SK-N-SH (cell line): ENCODE measurements at regions of chr1 and their contacts with region 1.

Region 1: GRCh38 chr1:216742625-216743024 is 19.4 kb upstream of the ESRRG start:
- DNase-seq: no peak
- H3K4me3 ChIP-seq: no peak overlapping the region
- H3K27ac ChIP-seq: no peak overlapping the region
- H3K4me1 ChIP-seq: peaks cover 0 to 2% of the 10 kb centered on the region in 2 experiments; a peak in 1 of 4 replicates
- H3K27me3 ChIP-seq: no peaks in the 10 kb centered on the region
- CTCF ChIP-seq: peak; percentile 67
- EP300 ChIP-seq: no peak
- RAD21 ChIP-seq: peak; percentile 68

Region 2: GRCh38 chr1:215992620-215993019 is 750.0 kb before region 1 on chr1:
- CTCF ChIA-PET with region 1: interaction called, 11 read pairs
- POLR2A ChIA-PET with region 1: no interaction called
- DNase-seq: peak; percentile 32
- H3K4me3 ChIP-seq: no peak overlapping the region
- H3K27ac ChIP-seq: no peak overlapping the region
- H3K4me1 ChIP-seq: peaks cover 0 to 3% of the 10 kb centered on the region in 2 experiments; a peak in 2 of 4 replicates
- H3K27me3 ChIP-seq: no peaks in the 10 kb centered on the region
- CTCF ChIP-seq: peak; percentile 64
- EP300 ChIP-seq: no peak
- RAD21 ChIP-seq: peak; percentile 87

Region 3: GRCh38 chr1:216710055-216710454 is 32.6 kb before region 1 on chr1:
- CTCF ChIA-PET with region 1: no interaction called
- POLR2A ChIA-PET with region 1: no interaction called
- DNase-seq: no peak
- H3K4me3 ChIP-seq: no peak overlapping the region
- H3K27ac ChIP-seq: peak overlapping the region in 1 of 2 experiments; percentile 40; a peak in 1 of 4 replicates
- H3K4me1 ChIP-seq: peaks cover 0 to 20% of the 10 kb centered on the region in 2 experiments; a peak in 2 of 4 replicates
- H3K27me3 ChIP-seq: no peaks in the 10 kb centered on the region
- CTCF ChIP-seq: no peak
- EP300 ChIP-seq: no peak
- RAD21 ChIP-seq: no peak

Region 4: GRCh38 chr1:216723274-216723780 is 19.3 kb before region 1 on chr1 and contains the start of gene ESRRG:
- CTCF ChIA-PET with region 1: interaction called, 27 read pairs
- POLR2A ChIA-PET with region 1: no interaction called
- DNase-seq: peak; percentile 75
- H3K4me3 ChIP-seq: peak within 1 kb of the TSS; percentile 61 to 71
- H3K27ac ChIP-seq: peak within 1 kb of the TSS in 1 of 2 experiments; percentile 76; a peak in 2 of 4 replicates
- H3K4me1 ChIP-seq: peaks cover 0 to 4% of the 10 kb centered on the region in 2 experiments; a peak in 2 of 4 replicates
- H3K27me3 ChIP-seq: no peaks in the 10 kb centered on the region
- CTCF ChIP-seq: no peak
- EP300 ChIP-seq: peak in 1 of 2 experiments; percentile 27; a peak in 1 of 4 replicates
- RAD21 ChIP-seq: no peak
- polyA plus RNA-seq, gene ESRRG: 0.26 and 0.57 TPM in 2 replicates

Region 5: DNA sequence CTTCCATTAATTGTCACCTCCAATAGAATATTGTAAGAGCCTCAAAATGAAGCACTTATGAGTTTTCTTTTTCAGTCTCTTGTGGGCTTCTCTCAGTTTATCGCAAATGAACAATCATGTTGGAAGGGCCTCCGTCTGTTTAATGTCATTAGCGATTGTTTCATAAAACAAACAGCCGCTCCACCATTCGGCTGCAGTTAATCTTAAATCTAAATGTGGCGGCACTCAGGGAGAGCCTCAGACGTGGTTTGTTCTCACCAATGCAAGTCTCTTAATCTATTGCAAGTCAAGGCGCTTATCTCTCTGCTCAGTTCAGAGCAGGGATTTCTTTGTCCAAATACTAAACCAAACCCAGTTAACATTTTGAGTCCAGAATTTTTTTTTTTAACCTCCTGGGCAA is 15.5 kb after region 1 on chr1:
- CTCF ChIA-PET with region 1: no interaction called
- POLR2A ChIA-PET with region 1: no interaction called
- DNase-seq: peak; percentile 6
- H3K4me3 ChIP-seq: no peak overlapping the region
- H3K27ac ChIP-seq: no peak overlapping the region
- H3K4me1 ChIP-seq: peaks cover 0 to 3% of the 10 kb centered on the region in 2 experiments; a peak in 1 of 4 replicates
- H3K27me3 ChIP-seq: no peaks in the 10 kb centered on the region
- CTCF ChIP-seq: no peak
- EP300 ChIP-seq: peak in 1 of 2 experiments; percentile 37; a peak in 1 of 4 replicates
- RAD21 ChIP-seq: no peak

Region 6: GRCh38 chr1:216832197-216832596 is 89.6 kb after region 1 on chr1:
- CTCF ChIA-PET with region 1: no interaction called
- POLR2A ChIA-PET with region 1: no interaction called
- DNase-seq: no peak
- H3K4me3 ChIP-seq: no peak overlapping the region
- H3K27ac ChIP-seq: no peak overlapping the region
- H3K4me1 ChIP-seq: peaks cover 0 to 3% of the 10 kb centered on the region in 2 experiments; a peak in 1 of 4 replicates
- H3K27me3 ChIP-seq: no peaks in the 10 kb centered on the region
- CTCF ChIP-seq: no peak
- EP300 ChIP-seq: no peak
- RAD21 ChIP-seq: no peak

Region 7: DNA sequence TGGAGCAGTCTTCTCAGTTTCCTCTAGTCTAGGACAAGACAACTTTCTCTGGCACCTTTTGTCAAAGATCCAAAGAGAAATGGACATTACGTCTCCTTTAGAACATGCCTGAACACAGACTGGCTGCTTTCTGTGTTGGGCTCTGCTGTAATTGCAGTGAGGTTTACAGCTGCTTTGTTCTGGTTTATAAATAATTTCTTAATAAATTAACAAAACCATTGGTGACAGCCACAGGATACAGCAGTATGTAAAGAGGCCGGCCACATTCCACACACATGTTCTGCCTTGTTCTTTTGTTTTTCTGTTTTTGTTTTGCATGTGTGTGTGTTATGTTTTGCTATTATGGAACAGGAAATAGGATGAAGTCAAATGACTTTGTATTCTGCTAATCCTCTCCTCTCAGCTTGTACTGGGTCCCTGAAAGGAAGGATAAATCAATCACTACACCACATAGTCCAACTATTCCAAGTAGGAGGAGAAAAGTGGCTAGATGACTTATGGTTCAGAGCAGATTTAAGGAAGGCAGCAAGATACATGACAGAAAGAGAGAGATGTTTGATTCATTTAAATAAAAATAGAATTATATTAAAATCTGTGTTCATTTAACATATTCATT is 142.1 kb after region 1 on chr1:
- CTCF ChIA-PET with region 1: no interaction called
- POLR2A ChIA-PET with region 1: no interaction called
- DNase-seq: no peak
- H3K4me3 ChIP-seq: no peak overlapping the region
- H3K27ac ChIP-seq: peak overlapping the region in 1 of 2 experiments; percentile 36; a peak in 1 of 4 replicates
- H3K4me1 ChIP-seq: no peaks in the 10 kb centered on the region; a peak in 1 of 4 replicates
- H3K27me3 ChIP-seq: no peaks in the 10 kb centered on the region
- CTCF ChIP-seq: no peak
- EP300 ChIP-seq: no peak
- RAD21 ChIP-seq: no peak